ENCODE measurements at regions of chr1 and their contacts with region 1.

Region 1: GRCh38 chr1:18956369-18957135 is at the start of gene IFFO2:
- DNase-seq: peak; percentile 99
- ATAC-seq: peak; percentile 76
- H3K4me3 Mint-ChIP-seq: peak within 1 kb of the TSS; percentile 86
- H3K27ac Mint-ChIP-seq: peak within 1 kb of the TSS; percentile 78
- H3K4me1 Mint-ChIP-seq: peaks cover 45% of the 10 kb centered on the region
- H3K27me3 Mint-ChIP-seq: peaks cover 2% of the 10 kb centered on the region
- total RNA-seq, gene IFFO2: 48.3 to 62.7 TPM

Region 2: GRCh38 chr1:18282851-18283600 is 673.5 kb before region 1 on chr1:
- CTCF ChIA-PET with region 1: no interaction called
- POLR2A ChIA-PET with region 1: no interaction called
- intact Hi-C with region 1: no loop called
- DNase-seq: no peak
- ATAC-seq: peak; percentile 39
- H3K4me3 Mint-ChIP-seq: no peak overlapping the region
- H3K27ac Mint-ChIP-seq: no peak overlapping the region
- H3K4me1 Mint-ChIP-seq: no peaks in the 10 kb centered on the region
- H3K27me3 Mint-ChIP-seq: peaks cover 18% of the 10 kb centered on the region

Region 3: DNA sequence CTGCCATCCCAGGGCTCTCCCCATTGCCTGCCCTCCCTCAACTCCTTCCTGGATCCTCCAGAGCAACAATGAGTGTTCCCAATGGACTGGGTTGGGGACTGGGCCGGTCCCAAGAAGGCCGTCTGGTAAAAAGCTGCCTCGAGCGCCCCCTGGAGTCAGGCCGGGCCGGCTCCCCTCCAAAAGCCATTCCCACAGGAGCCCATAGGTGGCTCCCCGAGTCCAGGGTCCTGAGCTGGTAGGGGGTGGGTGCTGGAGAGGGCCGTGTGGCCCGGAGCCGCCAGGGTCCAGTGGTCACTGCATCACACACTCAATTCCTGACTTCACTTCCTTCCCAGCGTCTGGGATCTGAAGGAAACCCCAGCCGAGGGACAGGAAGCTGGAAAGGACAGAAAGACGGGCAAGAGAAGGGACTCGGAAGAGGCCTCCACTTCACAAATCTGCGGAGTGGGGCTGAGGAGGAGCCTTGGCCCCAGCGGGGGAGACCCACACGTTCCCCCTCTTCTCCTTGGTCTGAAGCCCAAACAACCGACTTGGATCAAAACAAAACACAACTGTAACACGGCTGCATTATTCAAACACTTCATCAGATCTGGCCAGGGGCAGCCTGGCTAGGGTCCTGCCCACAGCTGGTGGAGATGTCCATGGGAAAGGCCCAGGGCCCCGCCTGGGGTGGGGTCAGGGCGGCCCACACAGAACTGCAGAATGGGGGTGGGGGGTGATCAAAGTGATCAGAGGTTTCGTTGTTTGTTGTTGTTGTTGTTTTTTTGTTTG is 43.3 kb before region 1 on chr1:
- CTCF ChIA-PET with region 1: interaction called, 28 read pairs
- POLR2A ChIA-PET with region 1: interaction called, 4 read pairs
- intact Hi-C with region 1: no loop called
- DNase-seq: peak; percentile 87
- ATAC-seq: peak; percentile 86
- H3K4me3 Mint-ChIP-seq: no peak overlapping the region
- H3K27ac Mint-ChIP-seq: peak overlapping the region; percentile 70
- H3K4me1 Mint-ChIP-seq: peaks cover 28% of the 10 kb centered on the region
- H3K27me3 Mint-ChIP-seq: no peaks in the 10 kb centered on the region

Region 4: GRCh38 chr1:19010995-19011844 is 54.7 kb after region 1 on chr1:
- CTCF ChIA-PET with region 1: interaction called, 5 read pairs
- POLR2A ChIA-PET with region 1: interaction called, 5 read pairs
- intact Hi-C with region 1: loop called (anchors 1 kb)
- DNase-seq: peak; percentile 93
- ATAC-seq: peak; percentile 97
- H3K4me3 Mint-ChIP-seq: peak overlapping the region; percentile 12
- H3K27ac Mint-ChIP-seq: peak overlapping the region; percentile 87
- H3K4me1 Mint-ChIP-seq: peaks cover 36% of the 10 kb centered on the region
- H3K27me3 Mint-ChIP-seq: peaks cover 2% of the 10 kb centered on the region

Region 5: DNA sequence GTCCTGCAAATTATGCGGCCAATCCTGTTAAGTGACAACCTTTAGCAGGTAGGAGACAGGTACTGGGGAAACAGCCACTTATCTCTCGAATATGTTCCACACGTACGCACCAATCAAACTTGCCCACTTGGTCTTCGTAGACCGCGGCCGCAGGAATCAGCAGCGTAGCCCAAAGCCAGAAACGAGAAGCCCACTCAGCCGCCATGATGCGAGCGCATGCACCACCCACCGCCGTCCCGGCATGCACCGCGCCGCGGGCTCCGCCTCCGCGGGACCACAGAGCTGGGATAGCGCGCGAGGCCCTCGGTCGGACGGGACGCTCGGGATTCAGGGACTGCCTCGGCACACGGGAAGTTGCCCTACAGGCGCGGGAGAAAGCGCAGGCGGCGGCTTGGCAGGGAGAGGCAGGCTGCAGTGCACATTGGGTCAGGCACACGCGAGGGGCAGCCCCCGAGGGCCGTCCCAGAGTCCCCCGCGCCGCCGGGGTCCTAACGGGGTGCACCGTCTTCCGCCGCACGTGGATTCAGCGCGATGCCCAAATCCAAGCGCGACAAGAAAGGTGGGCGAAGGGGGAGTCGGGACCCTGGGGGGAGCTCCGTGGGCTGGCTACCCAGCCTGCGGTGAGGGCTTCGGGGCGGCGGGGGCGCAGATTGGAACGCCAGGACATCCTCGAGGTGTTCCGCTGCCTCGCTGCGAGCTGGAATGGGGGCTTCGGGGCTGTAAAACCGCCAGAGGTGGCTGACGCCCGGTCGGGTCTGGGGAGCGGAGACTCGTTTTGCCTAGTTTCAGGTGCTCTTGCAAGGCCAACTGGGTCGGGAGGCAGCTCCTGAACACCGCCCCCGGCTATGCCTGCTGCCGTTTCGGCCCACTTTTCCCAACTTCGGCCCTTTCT is 295.0 kb after region 1 on chr1 and contains the starts of genes EMC1 and MRTO4:
- CTCF ChIA-PET with region 1: no interaction called
- POLR2A ChIA-PET with region 1: interaction called, 3 read pairs
- intact Hi-C with region 1: loop called in 1 of 2 experiments (anchors 1 kb)
- DNase-seq: peak; percentile 94
- ATAC-seq: peak; percentile 87
- H3K4me3 Mint-ChIP-seq: peak within 1 kb of the TSS; percentile 99
- H3K27ac Mint-ChIP-seq: peak within 1 kb of the TSS; percentile 96
- H3K4me1 Mint-ChIP-seq: peaks cover 45% of the 10 kb centered on the region
- H3K27me3 Mint-ChIP-seq: no peaks in the 10 kb centered on the region
- total RNA-seq, gene EMC1: 45.0 to 59.0 TPM
- total RNA-seq, gene MRTO4: 82.6 to 95.0 TPM

Region 6: DNA sequence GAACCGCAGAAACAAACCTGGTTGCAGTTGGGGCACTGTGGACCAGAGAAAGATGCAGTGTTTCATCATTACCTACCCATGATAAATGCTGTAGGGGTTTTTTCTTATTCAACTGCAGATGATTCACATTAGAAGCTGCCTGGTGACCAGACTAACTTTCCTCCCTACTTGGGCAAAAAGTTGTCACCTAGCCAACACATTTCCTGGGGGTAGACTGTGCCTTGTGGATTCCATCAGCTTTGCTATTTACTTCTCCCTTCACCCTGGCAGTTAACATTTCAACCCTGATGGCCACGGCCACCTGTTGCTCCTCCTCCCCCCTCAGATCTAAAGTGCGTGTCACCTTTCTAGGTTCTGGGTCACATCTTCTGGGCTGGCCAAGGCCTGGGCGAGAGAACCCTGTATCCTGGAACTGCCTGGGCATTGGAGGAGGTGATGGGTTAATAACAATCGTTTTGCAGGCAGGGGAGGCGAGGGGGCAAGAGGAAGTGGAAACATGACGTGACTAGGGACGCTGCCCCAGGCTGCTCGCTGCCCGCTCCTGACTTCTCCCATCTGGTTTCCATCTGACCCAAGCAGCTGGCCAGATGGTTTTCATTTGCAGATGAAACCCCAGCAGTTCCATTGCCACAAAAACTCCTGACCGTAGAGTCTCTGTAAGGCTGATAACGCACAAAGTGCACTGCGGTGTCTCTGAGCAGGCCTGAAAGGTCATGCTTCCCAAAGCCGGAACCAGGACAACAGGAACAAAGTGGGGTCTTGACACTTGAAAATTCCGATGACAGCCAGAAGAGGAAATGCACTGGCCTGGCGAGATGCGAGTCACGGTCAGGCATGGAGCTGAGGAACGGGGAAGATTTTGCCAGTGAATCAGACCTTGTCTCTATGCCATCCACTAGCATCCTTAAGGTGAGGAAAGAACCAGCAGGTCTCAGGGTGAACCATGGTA is 492.2 kb after region 1 on chr1:
- CTCF ChIA-PET with region 1: no interaction called
- POLR2A ChIA-PET with region 1: no interaction called
- intact Hi-C with region 1: loop called in 1 of 2 experiments (anchors 10 kb)
- DNase-seq: peak; percentile 65
- ATAC-seq: peak; percentile 77
- H3K4me3 Mint-ChIP-seq: peak overlapping the region; percentile 6
- H3K27ac Mint-ChIP-seq: peak overlapping the region; percentile 92
- H3K4me1 Mint-ChIP-seq: peaks cover 91% of the 10 kb centered on the region
- H3K27me3 Mint-ChIP-seq: no peaks in the 10 kb centered on the region

Measured in activated CD4-positive, alpha-beta T cell treated with anti-CD3 and anti-CD28 coated beads for 36 hours (primary cell).